ENCODE measurements at regions of chr9 and their contacts with region 1.

Region 1: DNA sequence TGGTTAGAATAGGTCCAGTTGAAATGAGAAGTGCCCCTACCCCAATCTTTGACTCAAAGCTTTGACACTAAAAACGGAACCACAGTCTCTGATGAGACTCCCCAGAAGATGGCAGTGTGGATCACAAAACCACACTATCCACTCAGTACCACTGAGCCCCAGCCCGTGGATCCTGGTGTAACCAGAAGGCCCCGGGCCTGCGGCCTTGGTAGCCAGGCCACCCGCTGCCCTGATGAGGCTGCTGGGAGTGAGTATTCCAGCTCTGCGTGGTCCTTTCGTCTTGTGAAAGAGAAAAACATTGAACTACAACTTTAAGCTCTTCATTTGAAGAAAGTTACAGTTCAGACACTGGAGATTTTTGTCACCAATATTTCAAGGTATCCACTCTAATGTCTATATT is 42.2 kb upstream of the FBP1 start:
- DNase-seq: peak; percentile 18 to 74 (median 49)
- ATAC-seq: peak; percentile 70
- H3K4me3 ChIP-seq: no peak overlapping the region
- H3K4me3 Mint-ChIP-seq: no peak overlapping the region
- H3K27ac ChIP-seq: no peak overlapping the region
- H3K27ac Mint-ChIP-seq: no peak overlapping the region
- H3K4me1 ChIP-seq: no peaks in the 10 kb centered on the region
- H3K4me1 Mint-ChIP-seq: no peaks in the 10 kb centered on the region
- H3K27me3 ChIP-seq: no peaks in the 10 kb centered on the region
- H3K27me3 Mint-ChIP-seq: peaks cover 14% of the 10 kb centered on the region
- CTCF ChIP-seq: peak; percentile 86

Region 2: GRCh38 chr9:94783102-94783664 is 101.7 kb after region 1 on chr9:
- CTCF ChIA-PET with region 1: interaction called, 5 read pairs
- POLR2A ChIA-PET with region 1: no interaction called
- intact Hi-C with region 1: loop called in 1 of 2 experiments (anchors 5 kb)
- DNase-seq: peak; percentile 4 to 64 (median 37)
- ATAC-seq: no peak
- H3K4me3 ChIP-seq: no peak overlapping the region
- H3K4me3 Mint-ChIP-seq: no peak overlapping the region
- H3K27ac ChIP-seq: no peak overlapping the region
- H3K27ac Mint-ChIP-seq: no peak overlapping the region
- H3K4me1 ChIP-seq: no peaks in the 10 kb centered on the region
- H3K4me1 Mint-ChIP-seq: peaks cover 4% of the 10 kb centered on the region
- H3K27me3 ChIP-seq: no peaks in the 10 kb centered on the region
- H3K27me3 Mint-ChIP-seq: no peaks in the 10 kb centered on the region
- CTCF ChIP-seq: peak; percentile 53

Region 3: GRCh38 chr9:94799578-94800264 is 118.2 kb after region 1 on chr9:
- CTCF ChIA-PET with region 1: no interaction called
- POLR2A ChIA-PET with region 1: no interaction called
- intact Hi-C with region 1: no loop called
- DNase-seq: no peak
- ATAC-seq: no peak
- H3K4me3 ChIP-seq: no peak overlapping the region
- H3K4me3 Mint-ChIP-seq: no peak overlapping the region
- H3K27ac ChIP-seq: no peak overlapping the region
- H3K27ac Mint-ChIP-seq: no peak overlapping the region
- H3K4me1 ChIP-seq: no peaks in the 10 kb centered on the region
- H3K4me1 Mint-ChIP-seq: no peaks in the 10 kb centered on the region
- H3K27me3 ChIP-seq: no peaks in the 10 kb centered on the region
- H3K27me3 Mint-ChIP-seq: no peaks in the 10 kb centered on the region
- CTCF ChIP-seq: no peak

Region 4: GRCh38 chr9:94900222-94901018 is 218.9 kb after region 1 on chr9:
- CTCF ChIA-PET with region 1: no interaction called
- POLR2A ChIA-PET with region 1: no interaction called
- intact Hi-C with region 1: no loop called
- DNase-seq: no peak
- ATAC-seq: no peak
- H3K4me3 ChIP-seq: no peak overlapping the region
- H3K4me3 Mint-ChIP-seq: no peak overlapping the region
- H3K27ac ChIP-seq: no peak overlapping the region
- H3K27ac Mint-ChIP-seq: no peak overlapping the region
- H3K4me1 ChIP-seq: no peaks in the 10 kb centered on the region
- H3K4me1 Mint-ChIP-seq: no peaks in the 10 kb centered on the region
- H3K27me3 ChIP-seq: no peaks in the 10 kb centered on the region
- H3K27me3 Mint-ChIP-seq: no peaks in the 10 kb centered on the region
- CTCF ChIP-seq: no peak

Region 5: DNA sequence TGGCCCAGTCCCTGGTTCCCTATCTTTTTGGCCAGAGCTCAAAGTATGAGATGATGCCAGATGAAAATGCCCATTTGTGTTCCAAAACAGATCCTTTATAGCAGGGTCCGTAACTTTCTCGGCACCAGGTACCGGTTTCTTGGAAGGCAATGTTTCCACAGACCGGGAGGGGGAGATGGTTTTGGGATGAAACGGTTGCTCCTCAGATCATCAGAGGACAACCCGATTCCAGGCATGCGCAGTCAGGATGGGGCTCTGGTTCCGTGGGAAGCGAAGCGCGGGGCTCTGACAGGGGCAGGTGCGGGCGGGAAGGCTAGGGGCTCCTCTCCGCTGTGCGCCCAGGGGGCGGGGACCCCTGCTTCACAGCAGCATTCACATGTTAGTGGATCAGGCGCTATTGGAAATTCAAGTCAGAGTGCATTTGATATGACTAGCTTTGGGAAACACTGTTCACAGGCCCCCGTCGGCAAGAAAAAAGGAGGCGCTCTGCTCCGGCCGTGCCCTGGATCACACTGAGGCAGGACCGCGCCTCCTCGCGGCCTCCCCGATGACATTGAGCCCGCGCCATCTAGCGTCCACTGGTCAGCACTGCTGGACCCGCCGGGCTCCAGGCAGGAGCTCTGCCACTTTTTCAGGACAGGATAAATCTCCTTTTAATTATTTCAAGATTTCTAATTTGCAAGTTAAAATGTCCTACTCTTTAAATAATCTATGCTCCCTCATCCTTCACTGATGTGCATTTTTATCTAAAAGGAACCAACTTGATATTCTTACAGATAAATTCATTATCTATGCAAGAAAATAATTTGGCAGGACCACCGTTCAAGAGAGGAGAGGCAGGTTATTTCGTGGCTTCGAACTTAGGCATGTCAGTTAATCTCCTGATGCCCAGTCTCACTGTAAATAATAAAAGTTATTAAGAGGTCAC is 446.0 kb after region 1 on chr9:
- CTCF ChIA-PET with region 1: interaction called, 242 read pairs
- POLR2A ChIA-PET with region 1: interaction called, 3 read pairs
- intact Hi-C with region 1: loop called (anchors 1 kb)
- DNase-seq: peak; percentile 42 to 80 (median 67)
- ATAC-seq: peak; percentile 68
- H3K4me3 ChIP-seq: no peak overlapping the region
- H3K4me3 Mint-ChIP-seq: no peak overlapping the region
- H3K27ac ChIP-seq: no peak overlapping the region
- H3K27ac Mint-ChIP-seq: no peak overlapping the region
- H3K4me1 ChIP-seq: no peaks in the 10 kb centered on the region
- H3K4me1 Mint-ChIP-seq: peaks cover 4% of the 10 kb centered on the region
- H3K27me3 ChIP-seq: no peaks in the 10 kb centered on the region
- H3K27me3 Mint-ChIP-seq: no peaks in the 10 kb centered on the region
- CTCF ChIP-seq: peak; percentile 78

Region 6: GRCh38 chr9:95181226-95181818 is 499.8 kb after region 1 on chr9:
- CTCF ChIA-PET with region 1: interaction called, 15 read pairs
- POLR2A ChIA-PET with region 1: no interaction called
- intact Hi-C with region 1: loop called in 1 of 2 experiments (anchors 1 kb)
- DNase-seq: peak in 2 of 9 experiments; percentile 12 to 18
- ATAC-seq: no peak
- H3K4me3 ChIP-seq: no peak overlapping the region
- H3K4me3 Mint-ChIP-seq: no peak overlapping the region
- H3K27ac ChIP-seq: no peak overlapping the region
- H3K27ac Mint-ChIP-seq: no peak overlapping the region
- H3K4me1 ChIP-seq: no peaks in the 10 kb centered on the region
- H3K4me1 Mint-ChIP-seq: no peaks in the 10 kb centered on the region
- H3K27me3 ChIP-seq: no peaks in the 10 kb centered on the region
- H3K27me3 Mint-ChIP-seq: no peaks in the 10 kb centered on the region
- CTCF ChIP-seq: peak; percentile 74

Region 7: GRCh38 chr9:96317335-96317980 is 1636.0 kb after region 1 on chr9:
- CTCF ChIA-PET with region 1: no interaction called
- POLR2A ChIA-PET with region 1: no interaction called
- intact Hi-C with region 1: loop called (anchors 2 kb)
- DNase-seq: peak in 7 of 9 experiments; percentile 13 to 73 (median 61)
- ATAC-seq: no peak
- H3K4me3 ChIP-seq: no peak overlapping the region
- H3K4me3 Mint-ChIP-seq: no peak overlapping the region
- H3K27ac ChIP-seq: no peak overlapping the region
- H3K27ac Mint-ChIP-seq: no peak overlapping the region
- H3K4me1 ChIP-seq: no peaks in the 10 kb centered on the region
- H3K4me1 Mint-ChIP-seq: no peaks in the 10 kb centered on the region
- H3K27me3 ChIP-seq: no peaks in the 10 kb centered on the region
- H3K27me3 Mint-ChIP-seq: no peaks in the 10 kb centered on the region
- CTCF ChIP-seq: peak; percentile 80

Measured in CD8-positive, alpha-beta T cell (primary cell).